Prostate gland (tissue), 2 donors: ENCODE measurements at regions of chr19 and their contacts with region 1.

Region 1: DNA sequence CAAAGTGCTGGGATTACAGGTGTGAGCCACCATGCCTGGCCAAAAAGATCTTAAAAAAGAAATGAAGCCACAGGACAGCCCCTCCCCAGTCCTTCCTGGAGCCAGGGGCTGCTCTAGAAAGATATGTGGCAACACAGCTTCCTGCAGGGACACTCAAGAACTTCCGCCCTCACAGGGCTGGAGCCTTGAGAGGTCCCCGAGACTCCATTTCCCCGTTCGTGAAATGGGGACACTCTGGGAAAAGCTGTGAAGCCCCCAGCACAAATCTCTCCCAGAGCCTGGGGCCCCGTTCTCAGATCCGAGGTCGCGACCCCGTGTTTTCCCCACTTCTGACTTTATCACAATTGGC is 2.5 kb upstream of the GPX4 start:
- DNase-seq: no peak
- H3K4me3 ChIP-seq: no peak overlapping the region
- H3K27ac ChIP-seq: peak overlapping the region; percentile 81 to 99
- H3K4me1 ChIP-seq: peaks cover 12% of the 10 kb centered on the region
- H3K27me3 ChIP-seq: no peaks in the 10 kb centered on the region
- CTCF ChIP-seq: no peak
- POLR2A ChIP-seq: no peak

Region 2: GRCh38 chr19:1027953-1028902 is 73.1 kb before region 1 on chr19:
- intact Hi-C with region 1: loop called (anchors 2 kb)
- DNase-seq: peak; percentile 75
- H3K4me3 ChIP-seq: peak overlapping the region; percentile 97
- H3K27ac ChIP-seq: peak overlapping the region; percentile 98 to 99
- H3K4me1 ChIP-seq: peaks cover 2% of the 10 kb centered on the region
- H3K27me3 ChIP-seq: no peaks in the 10 kb centered on the region
- CTCF ChIP-seq: no peak
- POLR2A ChIP-seq: peak; percentile 68